Right ventricle myocardium superior (tissue), 1 donor: ENCODE measurements at regions of chr12 and their contacts with region 1.

Region 1: DNA sequence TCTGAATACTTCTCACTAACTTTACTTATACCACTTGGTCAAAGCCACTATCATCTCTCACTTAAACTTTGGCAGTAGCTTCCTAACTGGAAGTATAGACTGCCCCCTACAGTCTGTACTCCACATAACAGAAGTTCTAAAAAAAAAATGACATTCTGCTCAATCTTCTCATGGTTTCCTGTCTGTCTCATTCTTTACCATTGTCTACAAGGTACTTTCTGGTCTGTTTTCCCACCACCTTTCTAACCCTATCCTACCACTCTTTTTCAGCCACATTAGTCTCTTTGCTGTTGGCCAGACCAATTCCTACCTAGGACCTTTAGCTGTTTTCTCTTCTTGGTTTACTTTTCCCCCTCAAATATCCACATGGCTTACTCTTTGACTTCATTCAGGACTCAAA is 14.7 kb downstream of the CPSF6 start:
- DNase-seq: no peak
- ATAC-seq: peak; percentile 68

Region 2: DNA sequence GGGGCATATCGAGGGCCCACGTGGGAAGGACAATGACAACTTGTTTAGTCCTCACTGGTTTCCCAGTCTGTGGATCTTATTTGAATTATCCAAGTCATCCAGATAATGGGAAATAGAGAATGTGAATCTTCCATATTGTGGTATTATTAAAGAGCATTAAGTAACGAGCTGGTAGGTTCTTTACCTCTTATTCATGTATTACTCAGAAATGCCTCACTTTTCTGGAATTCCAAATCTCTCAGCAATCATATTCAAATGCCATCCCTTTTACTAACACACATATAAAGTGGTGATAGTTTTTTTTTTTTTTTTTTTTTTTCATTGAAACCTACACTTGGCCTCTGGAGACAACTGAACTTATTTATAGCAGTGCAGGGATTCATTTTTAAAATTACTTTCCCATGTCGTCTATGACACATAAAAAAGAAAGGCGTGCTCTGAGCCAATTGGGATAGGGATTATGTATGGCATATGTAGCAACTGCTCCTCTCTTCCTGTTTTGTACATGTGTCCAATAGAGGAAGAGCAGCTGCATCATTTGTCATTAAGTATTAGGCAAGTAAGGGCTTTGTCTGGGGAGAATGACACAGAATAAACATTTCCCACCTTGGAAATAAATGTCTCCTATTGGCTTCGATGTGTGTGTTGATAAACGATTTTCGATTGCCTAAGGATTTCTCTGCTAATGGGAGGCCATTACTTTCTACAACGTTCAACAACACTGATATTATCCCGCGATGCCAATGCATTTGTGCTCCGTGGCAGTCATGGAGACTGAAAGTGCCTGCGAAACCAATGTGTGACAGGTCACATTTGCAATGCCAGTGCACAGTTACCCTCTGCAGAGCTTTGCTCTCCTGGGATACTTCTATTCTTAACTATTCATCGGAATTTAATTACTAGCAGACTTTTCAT is 1343.4 kb before region 1 on chr12:
- intact Hi-C with region 1: no loop called
- DNase-seq: no peak
- ATAC-seq: peak; percentile 74

Region 3: DNA sequence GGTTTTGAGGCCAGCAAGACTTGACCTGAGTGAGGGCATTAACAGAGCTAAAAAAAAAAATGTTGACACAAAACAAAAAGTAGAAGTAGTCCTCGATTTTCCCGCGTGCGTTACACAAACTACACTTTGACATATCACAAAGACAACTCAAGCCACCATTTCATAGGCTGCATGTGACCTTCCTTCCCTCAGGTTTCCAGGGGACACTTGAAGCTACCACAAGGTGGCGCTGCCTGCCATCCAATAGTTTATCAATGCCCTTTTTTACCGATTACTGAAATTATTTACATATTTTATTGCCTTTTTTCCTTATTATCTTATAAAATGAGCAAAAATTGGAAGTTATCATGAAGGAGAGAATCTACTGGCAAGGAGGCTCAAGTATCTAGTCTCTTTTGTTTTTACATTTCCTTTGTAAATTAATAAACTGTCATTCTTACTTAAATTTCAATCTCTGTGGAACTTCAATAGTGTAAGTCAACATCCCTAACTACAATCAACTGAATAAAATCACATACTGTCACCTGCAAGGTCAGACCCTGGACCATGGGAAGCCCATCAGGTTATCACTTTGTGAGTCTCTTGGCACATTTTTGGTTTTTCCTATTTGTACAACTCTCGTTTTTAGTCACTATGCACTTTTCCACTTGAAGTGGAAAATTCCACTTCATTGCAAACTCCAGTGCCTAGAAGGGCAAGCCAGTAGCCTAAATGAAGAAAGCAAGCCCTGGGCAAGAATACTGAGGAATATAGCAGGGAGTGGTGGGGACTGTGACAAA is 99.3 kb before region 1 on chr12:
- intact Hi-C with region 1: loop called (anchors 5 kb)
- DNase-seq: peak; percentile 76
- ATAC-seq: peak; percentile 67

Region 4: GRCh38 chr12:69214169-69214568 is 39.9 kb before region 1 on chr12:
- intact Hi-C with region 1: no loop called
- DNase-seq: no peak
- ATAC-seq: no peak

Region 5: DNA sequence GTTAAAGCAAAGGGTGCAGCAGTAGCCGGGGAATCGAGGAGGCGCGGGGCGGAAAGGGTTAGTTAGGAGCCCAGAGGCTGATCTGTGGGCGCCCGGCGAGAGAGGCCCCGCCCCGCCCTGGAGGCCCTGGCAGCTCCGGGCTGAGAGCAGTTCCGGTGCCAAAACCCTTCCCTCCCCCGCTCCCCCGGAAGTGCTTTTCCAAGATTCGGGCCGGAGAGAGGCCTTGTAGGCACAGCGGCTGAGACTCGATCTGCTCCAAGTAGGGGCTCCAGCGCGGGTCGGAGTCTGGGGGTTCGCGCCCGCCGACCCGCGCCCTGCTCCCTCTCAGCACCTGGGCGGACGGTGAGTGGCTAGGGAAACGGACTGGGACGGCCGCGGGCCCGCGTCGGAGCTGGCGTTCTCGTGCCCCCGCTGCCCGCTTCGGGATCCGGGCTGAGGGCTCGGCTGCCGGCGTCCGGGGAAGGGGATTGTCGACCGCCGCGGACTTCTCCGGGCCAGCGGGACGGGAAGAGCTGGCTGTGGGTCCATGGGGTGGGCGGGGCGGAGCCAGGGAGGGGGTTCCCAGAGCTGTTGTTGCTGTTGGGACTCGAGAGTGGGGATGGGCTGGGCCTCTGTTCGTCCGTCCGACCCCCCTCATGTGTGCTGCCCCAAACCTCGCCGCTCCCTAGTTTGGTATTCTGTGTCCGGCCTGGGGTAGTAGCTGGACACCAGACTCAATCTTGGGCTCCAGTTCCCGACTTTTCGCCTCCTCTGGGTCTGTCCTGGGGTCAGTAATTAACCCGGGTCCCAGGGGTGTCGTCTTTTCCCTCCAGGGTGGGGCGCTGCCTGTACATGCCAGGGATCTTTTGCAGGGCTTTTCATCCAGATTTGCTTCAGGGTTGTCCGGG is 216.4 kb after region 1 on chr12 and contains the start of gene FRS2:
- intact Hi-C with region 1: no loop called
- DNase-seq: peak; percentile 94
- ATAC-seq: peak; percentile 99
- total RNA-seq, gene FRS2: 18.0 TPM